Activated CD8-positive, alpha-beta T cell treated with anti-CD3 and anti-CD28 coated beads, Interleukin-2, amount 10 ng/mL, durations not matched to agents 7 days and 5 days (primary cell): ENCODE measurements at regions of chr14 and their contacts with region 1.

Region 1: DNA sequence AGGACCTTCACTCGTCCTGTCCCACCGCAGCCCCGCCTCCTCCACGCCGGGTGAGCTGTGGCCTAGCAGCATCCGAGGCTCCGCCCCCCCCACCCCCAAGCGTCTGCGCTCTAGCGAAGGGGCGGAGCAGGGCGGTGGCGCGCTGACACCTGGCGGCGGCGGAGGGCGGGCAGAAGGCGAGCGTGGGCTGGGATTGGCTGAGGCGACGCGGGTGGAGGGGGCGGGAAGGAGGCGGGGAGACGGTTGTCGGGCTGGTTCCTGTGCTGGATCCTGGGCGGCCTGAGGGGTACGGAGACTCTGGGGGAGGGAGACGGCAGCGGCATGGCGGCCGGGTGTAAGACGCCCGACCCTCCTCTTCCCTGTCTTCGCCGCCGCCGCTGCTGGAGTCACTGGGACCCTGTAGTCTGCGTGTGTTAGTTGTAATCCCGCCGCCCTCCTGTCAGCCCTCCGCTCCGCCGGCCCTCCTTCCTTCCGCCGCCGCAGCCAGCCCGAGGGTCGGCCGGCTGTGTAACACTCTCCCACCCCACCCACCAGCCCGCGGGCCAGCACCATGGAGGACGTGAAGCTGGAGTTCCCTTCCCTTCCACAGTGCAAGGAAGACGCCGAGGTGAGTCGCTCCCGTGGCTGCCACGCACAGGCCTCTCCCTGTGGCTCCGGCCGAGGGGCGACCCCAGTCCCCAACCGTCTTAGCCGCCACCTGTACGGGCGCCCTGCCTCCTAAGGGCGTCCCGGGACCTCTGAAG is at the start of gene STYX:
- DNase-seq: peak; percentile 99
- ATAC-seq: peak; percentile 96
- H3K4me3 Mint-ChIP-seq: peak within 1 kb of the TSS; percentile 93
- H3K27ac Mint-ChIP-seq: peak within 1 kb of the TSS; percentile 89
- H3K4me1 Mint-ChIP-seq: peaks cover 41% of the 10 kb centered on the region
- H3K27me3 Mint-ChIP-seq: no peaks in the 10 kb centered on the region
- total RNA-seq, gene STYX: 19.9 to 21.9 TPM

Region 2: GRCh38 chr14:52741865-52742264 is 11.8 kb after region 1 on chr14:
- CTCF ChIA-PET with region 1: interaction called, 12 read pairs
- POLR2A ChIA-PET with region 1: interaction called, 28 read pairs
- DNase-seq: no peak
- ATAC-seq: peak; percentile 48
- H3K4me3 Mint-ChIP-seq: peak overlapping the region; percentile 57
- H3K27ac Mint-ChIP-seq: peak overlapping the region; percentile 82
- H3K4me1 Mint-ChIP-seq: peaks cover 57% of the 10 kb centered on the region
- H3K27me3 Mint-ChIP-seq: no peaks in the 10 kb centered on the region